Panc1 (cell line): ENCODE measurements at regions of chr22 and their contacts with region 1.

Region 1: DNA sequence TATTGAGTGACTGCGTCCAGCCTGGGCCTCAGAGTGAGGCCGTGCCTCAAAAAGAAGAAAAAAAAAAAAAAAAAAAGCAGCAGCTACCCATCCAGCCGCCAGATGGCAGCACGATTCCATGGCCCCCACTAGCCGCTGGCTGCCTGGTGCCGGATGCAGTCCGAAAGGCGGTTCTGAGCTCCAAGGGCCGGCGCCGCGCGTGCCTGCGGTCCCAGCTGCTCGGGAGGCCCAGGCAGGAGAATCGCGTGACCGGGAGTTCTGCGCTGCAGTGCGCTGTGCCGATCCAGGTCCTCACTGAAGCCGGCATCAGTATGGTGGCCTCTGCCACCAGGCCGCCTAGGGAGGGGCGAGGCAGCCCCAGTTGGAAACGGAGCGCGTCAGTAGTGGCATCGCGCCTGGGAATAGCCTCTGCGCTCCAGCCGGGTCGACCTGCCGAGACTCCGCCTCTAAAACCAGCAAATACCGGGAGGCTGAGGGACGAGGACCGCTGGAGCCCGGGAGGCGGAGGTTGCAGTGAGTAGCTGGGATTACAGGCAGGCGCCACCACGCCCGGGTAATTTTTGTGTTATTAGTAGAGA is 19.3 kb downstream of the SCARF2 start:
- DNase-seq: peak; percentile 41
- ATAC-seq: peak; percentile 92
- H3K4me3 ChIP-seq: peak overlapping the region; percentile 45 to 59
- H3K27ac ChIP-seq: peak overlapping the region; percentile 54; the same call in 1 of the 2 replicates
- H3K4me1 ChIP-seq: no peaks in the 10 kb centered on the region
- H3K27me3 ChIP-seq: no peaks in the 10 kb centered on the region
- CTCF ChIP-seq: peak; percentile 88

Region 2: GRCh38 chr22:20456064-20456721 is 37.9 kb after region 1 on chr22:
- CTCF ChIA-PET with region 1: interaction called, 20 read pairs
- POLR2A ChIA-PET with region 1: interaction called, 3 read pairs
- in situ Hi-C with region 1: no loop called
- intact Hi-C with region 1: loop called (anchors 1 kb)
- DNase-seq: peak; percentile 50
- ATAC-seq: peak; percentile 95
- H3K4me3 ChIP-seq: no peak overlapping the region
- H3K27ac ChIP-seq: no peak overlapping the region
- H3K4me1 ChIP-seq: no peaks in the 10 kb centered on the region
- H3K27me3 ChIP-seq: no peaks in the 10 kb centered on the region
- CTCF ChIP-seq: peak; percentile 87

Region 3: GRCh38 chr22:20495861-20496681 is 77.8 kb after region 1 on chr22:
- CTCF ChIA-PET with region 1: interaction called, 13 read pairs
- POLR2A ChIA-PET with region 1: no interaction called
- in situ Hi-C with region 1: no loop called
- intact Hi-C with region 1: no loop called
- DNase-seq: peak; percentile 64
- ATAC-seq: peak; percentile 96
- H3K4me3 ChIP-seq: peak overlapping the region; percentile 70 to 82
- H3K27ac ChIP-seq: peak overlapping the region; percentile 95
- H3K4me1 ChIP-seq: no peaks in the 10 kb centered on the region; the same call in 1 of the 2 replicates
- H3K27me3 ChIP-seq: no peaks in the 10 kb centered on the region
- CTCF ChIP-seq: peak; percentile 91

Region 4: GRCh38 chr22:20523086-20523983 is 105.0 kb after region 1 on chr22:
- CTCF ChIA-PET with region 1: interaction called, 11 read pairs
- POLR2A ChIA-PET with region 1: no interaction called
- in situ Hi-C with region 1: no loop called
- intact Hi-C with region 1: no loop called
- DNase-seq: no peak
- ATAC-seq: 0 out of 2 replicates have a peak, but pooled peaks have one; percentile 27
- H3K4me3 ChIP-seq: no peak overlapping the region
- H3K27ac ChIP-seq: peak overlapping the region; percentile 51; the same call in 1 of the 2 replicates
- H3K4me1 ChIP-seq: peaks cover 15% of the 10 kb centered on the region
- H3K27me3 ChIP-seq: no peaks in the 10 kb centered on the region
- CTCF ChIP-seq: no peak

Region 5: GRCh38 chr22:20567993-20568417 is 149.7 kb after region 1 on chr22:
- CTCF ChIA-PET with region 1: interaction called, 11 read pairs
- POLR2A ChIA-PET with region 1: no interaction called
- in situ Hi-C with region 1: no loop called
- intact Hi-C with region 1: no loop called
- DNase-seq: no peak
- ATAC-seq: peak; percentile 25; the same call in 1 of the 2 replicates
- H3K4me3 ChIP-seq: no peak overlapping the region
- H3K27ac ChIP-seq: no peak overlapping the region
- H3K4me1 ChIP-seq: no peaks in the 10 kb centered on the region; the same call in 1 of the 2 replicates
- H3K27me3 ChIP-seq: no peaks in the 10 kb centered on the region
- CTCF ChIP-seq: peak; percentile 60

Region 6: DNA sequence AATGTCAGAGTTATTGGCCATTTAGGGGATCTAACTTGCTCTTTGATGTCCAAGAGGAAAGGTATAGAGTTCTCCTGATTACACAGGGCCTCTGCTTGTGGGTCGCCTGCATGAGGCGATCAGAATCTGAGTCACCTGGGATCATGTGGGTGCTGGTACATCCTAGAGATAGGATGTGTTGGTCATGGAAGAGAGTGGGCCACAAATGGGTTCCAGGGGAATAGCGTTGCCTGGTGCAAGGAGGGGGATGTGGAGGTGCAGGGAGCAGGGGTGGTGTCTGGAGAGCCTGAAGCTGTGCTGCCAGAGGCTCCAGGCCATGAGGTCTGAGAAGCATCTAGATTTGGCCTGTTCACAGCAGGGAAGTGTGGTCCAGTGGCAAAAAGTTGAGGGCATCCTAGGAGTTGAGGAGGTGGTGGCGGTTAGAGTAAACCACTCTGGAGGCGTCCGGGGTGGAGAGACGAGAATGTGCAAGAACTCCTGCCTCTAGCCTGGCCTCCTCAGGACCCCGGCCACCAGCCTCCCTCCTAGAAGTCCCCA is 181.9 kb after region 1 on chr22:
- CTCF ChIA-PET with region 1: interaction called, 14 read pairs
- POLR2A ChIA-PET with region 1: no interaction called
- in situ Hi-C with region 1: no loop called
- intact Hi-C with region 1: no loop called
- DNase-seq: no peak
- ATAC-seq: no peak
- H3K4me3 ChIP-seq: no peak overlapping the region
- H3K27ac ChIP-seq: no peak overlapping the region
- H3K4me1 ChIP-seq: no peaks in the 10 kb centered on the region
- H3K27me3 ChIP-seq: no peaks in the 10 kb centered on the region
- CTCF ChIP-seq: no peak